ENCODE measurements at regions of chr3 and their contacts with region 1.

Region 1: DNA sequence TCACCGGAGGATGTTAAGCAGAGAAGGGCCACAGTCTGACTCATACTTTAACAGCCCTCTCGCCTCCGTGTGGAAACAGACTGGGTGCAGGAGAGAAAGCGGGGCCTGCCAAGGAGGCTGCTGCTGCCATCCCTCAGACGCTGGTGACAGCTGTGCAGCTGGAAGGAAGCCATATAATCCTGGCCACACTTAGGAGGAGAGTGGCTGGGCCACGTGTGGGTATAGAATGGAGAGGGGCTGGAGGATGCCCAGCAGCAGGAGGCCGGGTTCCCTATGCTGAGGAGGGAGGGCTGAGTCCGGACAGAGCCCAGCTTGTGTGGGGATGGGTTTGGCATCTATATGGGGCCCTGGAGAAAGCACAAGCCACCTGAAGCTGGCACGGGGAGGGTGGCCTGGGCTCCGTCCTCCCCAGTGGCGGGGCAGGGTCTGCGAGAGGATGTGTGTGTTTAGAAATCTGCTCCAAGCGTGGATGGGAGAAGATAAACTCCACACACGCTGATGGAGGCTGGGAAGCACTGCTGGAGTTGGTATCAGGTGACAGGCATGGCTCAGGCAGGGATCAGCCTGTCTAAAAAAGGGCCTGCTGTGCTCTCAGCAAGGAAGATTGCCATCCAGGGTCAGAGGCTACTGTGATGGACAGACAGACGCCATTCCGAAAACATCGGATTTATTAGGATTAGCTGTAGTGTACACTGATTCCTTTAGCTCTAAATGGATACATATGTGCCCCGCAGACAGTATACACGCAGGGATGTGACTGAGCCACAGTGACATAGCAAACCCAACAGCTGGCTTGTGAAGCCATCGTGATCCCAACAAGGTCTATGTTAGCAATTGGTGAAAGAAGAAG is 15.9 kb downstream of the ABTB1 start:
- DNase-seq: peak; percentile 28
- ATAC-seq: no peak

Region 2: GRCh38 chr3:127817396-127817841 is 128.8 kb after region 1 on chr3:
- intact Hi-C with region 1: loop called (anchors 10 kb)
- DNase-seq: no peak
- ATAC-seq: peak; percentile 40